MCF 10A (cell line): ENCODE measurements at regions of chr7 and their contacts with region 1.

Region 1: DNA sequence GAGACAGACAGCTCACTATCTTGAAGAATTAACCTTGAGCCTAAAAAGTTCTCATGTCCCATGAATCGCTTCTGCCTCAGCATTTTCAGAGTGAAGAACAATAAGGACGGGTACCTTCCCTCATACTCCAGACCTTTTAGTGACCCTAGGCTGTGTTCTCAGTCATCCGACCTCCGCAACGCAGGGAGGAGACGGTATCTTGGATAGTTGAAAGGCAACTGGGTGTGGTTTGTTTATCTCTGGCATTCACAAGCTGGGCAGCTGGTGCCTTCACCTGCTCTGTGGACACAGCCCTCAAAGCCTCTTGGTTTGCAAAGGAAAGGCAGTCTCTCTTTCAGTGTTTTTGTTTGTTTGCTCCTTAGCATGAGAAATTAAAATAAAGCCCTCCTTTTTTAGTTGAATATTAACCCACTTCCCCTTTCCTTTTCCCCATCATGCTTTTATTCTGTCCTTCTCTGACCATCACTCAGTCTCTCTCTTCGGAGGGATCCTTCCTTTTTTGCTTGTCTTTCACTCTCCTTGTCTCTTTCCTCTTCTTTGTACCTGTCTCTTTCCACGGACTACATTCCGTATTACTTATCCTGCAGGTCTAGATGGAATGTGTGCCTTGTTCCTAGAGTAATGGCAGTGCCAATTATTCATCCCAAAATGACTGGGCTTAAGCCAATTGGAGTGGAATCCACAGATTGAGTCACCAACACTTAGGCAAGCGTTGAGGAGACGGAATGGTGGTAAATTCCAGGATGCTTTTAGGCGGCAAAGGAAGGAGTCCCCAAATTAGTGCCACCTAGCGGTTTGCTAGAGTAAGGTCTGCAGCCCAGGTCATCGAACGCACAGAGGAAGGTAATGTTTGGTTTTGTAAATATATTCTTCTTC is 45.8 kb downstream of the PRR15 start:
- DNase-seq: peak; percentile 91
- H3K4me3 Mint-ChIP-seq: peak overlapping the region; percentile 2
- H3K27ac Mint-ChIP-seq: no peak overlapping the region
- H3K4me1 Mint-ChIP-seq: peaks cover 41% of the 10 kb centered on the region
- H3K27me3 Mint-ChIP-seq: no peaks in the 10 kb centered on the region
- CTCF ChIP-seq: peak; percentile 50

Region 2: DNA sequence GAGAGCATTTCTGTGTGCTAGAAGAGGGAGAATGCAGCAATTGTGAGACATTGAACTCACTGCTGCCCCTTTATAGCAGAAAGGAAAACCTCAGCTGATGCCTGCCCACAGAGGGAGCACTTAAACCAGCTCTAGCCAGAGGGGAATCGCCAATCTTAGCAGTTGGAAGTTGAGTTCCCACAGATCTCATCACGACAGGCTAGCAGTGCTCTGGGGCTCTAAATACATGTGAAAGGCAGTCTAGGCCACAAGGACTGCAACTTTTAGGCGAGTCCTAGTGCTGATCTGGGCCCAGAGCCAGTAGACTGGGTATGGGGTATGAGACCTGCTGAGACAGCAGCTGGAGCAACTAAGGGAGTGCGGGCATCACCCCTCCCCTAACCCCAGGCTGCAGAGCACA is 71.0 kb before region 1 on chr7:
- CTCF ChIA-PET with region 1: interaction called, 8 read pairs
- POLR2A ChIA-PET with region 1: interaction called, 10 read pairs
- intact Hi-C with region 1: no loop called
- DNase-seq: peak; percentile 6
- H3K4me3 Mint-ChIP-seq: no peak overlapping the region
- H3K27ac Mint-ChIP-seq: peak overlapping the region; percentile 37
- H3K4me1 Mint-ChIP-seq: peaks cover 13% of the 10 kb centered on the region
- H3K27me3 Mint-ChIP-seq: no peaks in the 10 kb centered on the region
- CTCF ChIP-seq: no peak

Region 3: DNA sequence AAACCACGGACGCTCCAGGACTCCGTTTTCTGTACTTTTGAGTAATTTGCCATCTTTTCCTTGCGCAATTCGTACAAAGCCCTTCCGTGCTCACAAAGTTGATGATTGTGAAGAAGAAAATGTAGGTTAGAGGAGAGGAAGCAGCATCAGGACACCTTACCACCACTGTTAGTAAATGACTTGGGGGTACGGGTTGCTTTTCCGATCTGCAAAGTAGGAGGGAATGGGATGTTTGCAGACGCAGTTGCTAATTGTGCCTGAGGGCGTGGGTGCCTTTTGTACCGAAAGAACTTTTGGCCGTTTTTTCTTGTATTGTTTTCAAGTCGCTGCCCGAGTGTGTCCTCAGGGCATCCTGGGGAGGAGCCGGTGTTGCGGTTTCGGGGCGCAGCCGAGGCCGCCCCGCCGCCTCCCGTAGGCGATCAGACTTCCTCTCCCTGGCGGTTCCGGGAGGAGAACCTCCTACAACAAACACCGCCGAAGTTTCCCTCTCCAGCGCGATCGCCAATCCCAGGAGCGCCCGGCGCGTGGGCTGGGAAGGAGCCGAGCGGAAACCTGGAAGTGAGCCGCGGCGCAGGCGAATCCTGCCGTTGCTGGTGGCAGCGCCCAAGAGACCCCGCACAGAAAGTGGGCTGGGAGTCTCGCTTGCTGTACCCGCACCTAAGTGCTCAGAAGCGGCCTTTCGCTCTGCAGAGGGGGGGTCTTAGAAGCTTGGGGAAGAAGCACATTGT is 44.7 kb before region 1 on chr7:
- CTCF ChIA-PET with region 1: interaction called, 6 read pairs
- POLR2A ChIA-PET with region 1: interaction called, 58 read pairs
- intact Hi-C with region 1: loop called (anchors 1 kb)
- DNase-seq: peak; percentile 90
- H3K4me3 Mint-ChIP-seq: peak overlapping the region; percentile 98
- H3K27ac Mint-ChIP-seq: peak overlapping the region; percentile 94
- H3K4me1 Mint-ChIP-seq: peaks cover 19% of the 10 kb centered on the region
- H3K27me3 Mint-ChIP-seq: no peaks in the 10 kb centered on the region
- CTCF ChIP-seq: no peak

Region 4: GRCh38 chr7:29593459-29593858 is 15.9 kb before region 1 on chr7:
- CTCF ChIA-PET with region 1: interaction called, 4 read pairs
- POLR2A ChIA-PET with region 1: interaction called, 14 read pairs
- intact Hi-C with region 1: no loop called
- DNase-seq: no peak
- H3K4me3 Mint-ChIP-seq: no peak overlapping the region
- H3K27ac Mint-ChIP-seq: no peak overlapping the region
- H3K4me1 Mint-ChIP-seq: peaks cover 5% of the 10 kb centered on the region
- H3K27me3 Mint-ChIP-seq: no peaks in the 10 kb centered on the region
- CTCF ChIP-seq: no peak

Region 5: GRCh38 chr7:29622335-29623265 is 13.2 kb after region 1 on chr7:
- CTCF ChIA-PET with region 1: interaction called, 18 read pairs
- POLR2A ChIA-PET with region 1: interaction called, 26 read pairs
- intact Hi-C with region 1: no loop called
- DNase-seq: peak; percentile 95
- H3K4me3 Mint-ChIP-seq: peak overlapping the region; percentile 66
- H3K27ac Mint-ChIP-seq: peak overlapping the region; percentile 88
- H3K4me1 Mint-ChIP-seq: peaks cover 31% of the 10 kb centered on the region
- H3K27me3 Mint-ChIP-seq: no peaks in the 10 kb centered on the region
- CTCF ChIP-seq: no peak